ENCODE measurements at regions of chr17 and their contacts with region 1.

Region 1: DNA sequence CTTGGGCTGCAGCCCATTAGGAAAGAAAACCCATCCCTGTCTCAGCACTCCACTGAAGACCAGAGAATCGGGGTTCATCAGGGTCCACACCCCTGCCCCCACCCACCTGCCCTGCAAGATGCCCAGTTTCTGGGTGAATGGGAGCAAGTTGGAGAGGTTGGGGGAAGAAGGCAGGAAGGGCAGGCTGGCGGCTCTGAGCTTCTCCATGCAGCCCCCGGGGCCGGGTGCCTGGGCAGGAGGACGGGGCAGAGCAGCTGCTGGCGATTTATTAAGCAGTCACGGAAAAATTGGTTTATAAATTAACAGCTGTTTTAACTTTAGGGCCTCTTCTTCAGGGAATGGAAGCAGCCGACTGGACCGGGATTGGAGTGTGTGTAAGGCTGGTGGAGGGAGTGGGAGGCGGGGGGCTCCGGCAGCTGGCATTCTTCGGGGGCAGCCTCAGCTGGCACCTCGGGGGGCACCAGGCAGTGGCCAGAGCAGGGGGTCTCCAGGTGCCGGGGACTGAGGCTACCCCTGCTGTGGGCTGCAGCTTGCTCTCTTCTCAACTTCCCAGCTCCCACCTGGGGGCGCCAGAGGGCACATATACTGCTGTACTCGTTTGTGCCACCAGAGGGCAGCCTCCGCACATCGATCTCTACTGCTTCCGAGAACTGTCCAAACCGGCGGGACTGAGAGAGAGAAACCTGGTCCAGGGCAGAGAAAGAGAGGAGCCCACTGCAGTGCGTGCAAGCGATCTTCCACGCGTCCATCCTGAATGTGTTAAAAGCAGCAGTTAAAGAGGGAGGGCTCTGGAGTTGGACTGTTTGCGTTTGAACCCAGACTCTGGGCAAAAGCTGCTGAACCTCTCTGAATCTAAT is 5.0 kb upstream of the PPP1R1B start:
- DNase-seq: peak; percentile 91
- ATAC-seq: peak; percentile 51
- H3K4me3 Mint-ChIP-seq: no peak overlapping the region
- H3K27ac Mint-ChIP-seq: no peak overlapping the region
- H3K4me1 Mint-ChIP-seq: peaks cover 31% of the 10 kb centered on the region
- H3K27me3 Mint-ChIP-seq: peaks cover 82% of the 10 kb centered on the region
- CTCF ChIP-seq: peak; percentile 100

Region 2: DNA sequence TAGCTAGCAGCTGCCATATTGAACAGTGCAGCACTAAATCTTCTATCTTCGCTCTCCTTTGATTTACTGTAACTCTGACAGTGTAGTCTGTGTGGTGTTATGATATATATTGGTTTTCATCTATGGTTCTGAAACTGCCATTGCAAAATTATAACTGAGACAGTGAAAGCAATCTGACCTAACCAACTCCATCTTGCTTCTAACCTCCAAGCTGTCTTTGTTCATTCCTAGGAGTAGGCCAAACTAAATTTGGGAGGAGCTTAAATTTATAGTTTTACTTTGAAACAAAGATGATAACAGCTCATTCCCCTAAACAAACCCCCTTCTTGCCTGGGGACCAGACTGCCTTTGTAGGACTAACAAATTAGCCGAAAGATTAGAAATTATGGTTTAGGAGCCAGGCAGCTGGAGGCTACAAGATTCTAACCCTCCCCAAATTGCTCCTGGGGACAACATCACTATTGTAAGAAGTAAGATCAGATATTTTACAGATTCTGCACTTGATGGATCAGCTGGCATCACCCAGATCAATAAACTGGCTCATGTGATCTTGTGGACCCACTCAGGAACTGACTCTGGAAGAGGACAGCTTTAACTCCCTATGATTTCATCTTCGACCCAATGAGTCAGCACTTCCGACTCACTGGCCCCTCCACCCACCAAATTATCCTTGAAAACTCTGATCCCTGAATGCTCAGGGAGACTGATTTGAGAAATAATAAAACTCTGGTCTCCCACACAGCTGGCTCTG is 607.5 kb before region 1 on chr17:
- CTCF ChIA-PET with region 1: no interaction called
- POLR2A ChIA-PET with region 1: no interaction called
- DNase-seq: no peak
- ATAC-seq: no peak
- H3K4me3 Mint-ChIP-seq: no peak overlapping the region
- H3K27ac Mint-ChIP-seq: no peak overlapping the region; the same call in 1 of the 2 replicates
- H3K4me1 Mint-ChIP-seq: peaks cover 35% of the 10 kb centered on the region
- H3K27me3 Mint-ChIP-seq: no peaks in the 10 kb centered on the region; the same call in 1 of the 2 replicates
- CTCF ChIP-seq: no peak

Region 3: DNA sequence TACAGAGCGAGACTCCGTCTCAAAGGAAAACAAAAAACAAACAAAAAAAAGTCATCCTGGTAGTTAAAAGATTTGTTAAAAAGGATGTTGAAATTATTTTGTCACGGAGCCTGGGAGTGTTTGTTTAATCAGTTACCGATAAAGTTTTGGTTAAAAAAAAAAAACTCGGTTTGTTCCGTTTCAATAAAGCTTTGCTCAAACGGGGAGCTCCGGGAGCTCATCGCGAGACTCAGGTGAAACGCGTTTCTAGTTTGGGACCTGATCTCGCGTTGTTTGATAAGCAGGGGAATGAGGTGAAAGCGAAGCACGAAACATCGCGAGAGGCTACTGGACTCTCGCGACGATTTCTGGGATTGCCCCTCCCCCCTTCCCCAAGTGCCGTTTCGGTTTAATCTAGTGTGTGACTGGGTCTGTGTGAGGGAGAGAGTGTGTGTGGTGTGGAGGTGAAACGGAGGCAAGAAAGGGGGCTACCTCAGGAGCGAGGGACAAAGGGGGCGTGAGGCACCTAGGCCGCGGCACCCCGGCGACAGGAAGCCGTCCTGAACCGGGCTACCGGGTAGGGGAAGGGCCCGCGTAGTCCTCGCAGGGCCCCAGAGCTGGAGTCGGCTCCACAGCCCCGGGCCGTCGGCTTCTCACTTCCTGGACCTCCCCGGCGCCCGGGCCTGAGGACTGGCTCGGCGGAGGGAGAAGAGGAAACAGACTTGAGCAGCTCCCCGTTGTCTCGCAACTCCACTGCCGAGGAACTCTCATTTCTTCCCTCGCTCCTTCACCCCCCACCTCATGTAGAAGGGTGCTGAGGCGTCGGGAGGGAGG is 160.4 kb before region 1 on chr17 and contains the start of gene CDK12:
- CTCF ChIA-PET with region 1: interaction called, 11 read pairs
- POLR2A ChIA-PET with region 1: no interaction called
- DNase-seq: peak; percentile 93
- ATAC-seq: peak; percentile 92
- H3K4me3 Mint-ChIP-seq: peak within 1 kb of the TSS; percentile 93
- H3K27ac Mint-ChIP-seq: peak within 1 kb of the TSS; percentile 99
- H3K4me1 Mint-ChIP-seq: peaks cover 26% of the 10 kb centered on the region
- H3K27me3 Mint-ChIP-seq: no peaks in the 10 kb centered on the region; the same call in 1 of the 2 replicates
- CTCF ChIP-seq: no peak
- total RNA-seq, gene CDK12: 58.4 to 61.6 TPM (median 59.5 TPM) in 3 replicates

Region 4: DNA sequence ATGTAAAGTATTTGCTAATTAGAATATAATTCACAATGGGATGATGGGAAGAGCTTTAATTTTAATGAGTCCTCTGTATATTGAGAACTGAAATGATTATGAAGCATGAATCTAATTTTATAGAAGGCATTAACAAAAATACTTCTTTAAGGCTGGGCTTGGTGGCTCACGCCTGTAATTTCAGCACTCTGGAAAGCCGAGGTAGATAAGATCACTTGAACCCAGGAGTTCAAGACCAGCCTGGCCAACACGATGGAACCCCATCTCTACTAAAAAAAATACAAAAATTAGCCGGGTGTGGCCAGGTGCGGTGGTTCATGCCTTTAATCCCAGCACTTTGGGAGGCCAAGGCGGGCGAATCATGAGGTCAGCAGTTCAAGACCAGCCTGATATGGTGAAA is 148.4 kb before region 1 on chr17:
- CTCF ChIA-PET with region 1: no interaction called
- POLR2A ChIA-PET with region 1: no interaction called
- DNase-seq: peak; percentile 1
- ATAC-seq: no peak
- H3K4me3 Mint-ChIP-seq: no peak overlapping the region
- H3K27ac Mint-ChIP-seq: no peak overlapping the region
- H3K4me1 Mint-ChIP-seq: no peaks in the 10 kb centered on the region
- H3K27me3 Mint-ChIP-seq: no peaks in the 10 kb centered on the region
- CTCF ChIP-seq: no peak

Region 5: GRCh38 chr17:39508987-39509386 is 112.8 kb before region 1 on chr17:
- CTCF ChIA-PET with region 1: no interaction called
- POLR2A ChIA-PET with region 1: no interaction called
- DNase-seq: no peak
- ATAC-seq: no peak
- H3K4me3 Mint-ChIP-seq: no peak overlapping the region
- H3K27ac Mint-ChIP-seq: no peak overlapping the region
- H3K4me1 Mint-ChIP-seq: no peaks in the 10 kb centered on the region
- H3K27me3 Mint-ChIP-seq: no peaks in the 10 kb centered on the region
- CTCF ChIP-seq: no peak

Region 6: DNA sequence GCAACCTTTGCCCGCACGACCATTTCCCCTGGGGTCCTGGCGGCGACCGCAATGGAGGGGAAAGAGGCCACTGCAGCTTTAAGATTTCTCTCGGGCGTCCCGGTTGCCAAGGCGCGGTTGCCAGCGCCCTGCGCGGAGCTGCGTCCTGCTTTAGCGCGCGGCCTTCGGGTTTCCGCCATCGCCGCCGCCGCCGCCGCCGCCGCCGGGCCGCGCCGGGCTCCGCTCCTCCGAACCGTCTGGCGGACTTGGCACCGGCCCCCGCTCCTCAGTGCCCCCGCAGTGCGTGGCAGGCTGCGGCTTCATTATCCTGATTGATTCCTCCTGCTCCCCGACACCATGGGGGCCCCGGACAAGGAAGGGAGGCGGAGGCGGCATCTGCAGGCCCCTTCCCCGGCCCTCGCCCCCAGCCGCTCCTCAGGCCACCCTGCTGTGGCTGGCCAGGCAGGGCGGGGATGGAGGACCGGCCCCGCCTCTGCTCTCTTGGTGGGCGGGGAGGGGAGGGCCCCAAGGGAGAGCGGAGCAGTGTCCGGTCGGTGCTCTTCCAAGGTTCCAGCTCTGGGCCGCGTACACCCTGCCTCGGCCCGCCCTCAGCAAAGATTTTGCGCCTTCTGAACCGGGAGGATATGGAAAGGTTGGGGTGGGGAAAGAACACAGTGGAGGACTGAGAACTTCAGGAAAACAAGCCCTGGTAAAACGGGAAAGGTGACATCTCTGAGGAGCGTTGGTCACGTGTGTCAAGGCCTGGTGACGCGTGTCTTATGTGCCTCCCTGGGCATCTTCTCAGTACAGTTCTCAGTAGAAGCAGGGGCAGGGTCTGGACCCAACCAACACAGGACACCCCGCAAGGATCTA is 48.1 kb before region 1 on chr17:
- CTCF ChIA-PET with region 1: interaction called, 39 read pairs
- POLR2A ChIA-PET with region 1: no interaction called
- DNase-seq: peak; percentile 70
- ATAC-seq: peak; percentile 82
- H3K4me3 Mint-ChIP-seq: peak overlapping the region; percentile 79
- H3K27ac Mint-ChIP-seq: peak overlapping the region; percentile 73
- H3K4me1 Mint-ChIP-seq: peaks cover 12% of the 10 kb centered on the region
- H3K27me3 Mint-ChIP-seq: peaks cover 30% of the 10 kb centered on the region
- CTCF ChIP-seq: no peak

Region 7: DNA sequence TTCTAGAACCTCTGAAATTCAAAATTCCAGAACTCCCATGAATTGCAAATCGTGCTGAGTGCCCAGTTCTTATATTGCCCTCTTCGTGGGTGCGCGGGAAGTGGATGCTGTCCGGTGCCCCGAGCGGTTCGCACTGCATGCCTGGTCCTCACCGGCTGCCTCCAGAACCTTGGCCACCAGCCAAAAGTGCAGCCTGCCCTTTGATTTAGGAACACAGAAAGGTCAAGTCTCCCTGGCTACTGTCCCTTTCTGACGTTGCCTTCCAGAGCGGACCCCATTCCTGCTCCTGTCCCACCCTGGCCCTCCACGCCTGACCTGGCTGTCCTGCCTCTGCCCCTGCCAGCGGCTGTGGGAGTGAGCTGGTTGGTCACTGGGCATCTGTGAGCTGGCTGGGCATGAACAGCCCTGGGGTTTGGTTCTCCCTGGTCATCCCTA is 23.7 kb before region 1 on chr17:
- CTCF ChIA-PET with region 1: interaction called, 98 read pairs
- POLR2A ChIA-PET with region 1: no interaction called
- DNase-seq: no peak
- ATAC-seq: no peak
- H3K4me3 Mint-ChIP-seq: peak overlapping the region; percentile 20; the same call in 1 of the 2 replicates
- H3K27ac Mint-ChIP-seq: no peak overlapping the region
- H3K4me1 Mint-ChIP-seq: peaks cover 59% of the 10 kb centered on the region
- H3K27me3 Mint-ChIP-seq: peaks cover 100% of the 10 kb centered on the region
- CTCF ChIP-seq: no peak

Region 8: GRCh38 chr17:39643271-39643670 is 21.5 kb after region 1 on chr17:
- CTCF ChIA-PET with region 1: interaction called, 851 read pairs
- POLR2A ChIA-PET with region 1: no interaction called
- DNase-seq: no peak
- ATAC-seq: no peak
- H3K4me3 Mint-ChIP-seq: no peak overlapping the region
- H3K27ac Mint-ChIP-seq: 0 out of 2 replicates have a peak overlapping the region, but pooled peaks have one; percentile 37
- H3K4me1 Mint-ChIP-seq: peaks cover 55% of the 10 kb centered on the region
- H3K27me3 Mint-ChIP-seq: no peaks in the 10 kb centered on the region
- CTCF ChIP-seq: no peak

Region 9: DNA sequence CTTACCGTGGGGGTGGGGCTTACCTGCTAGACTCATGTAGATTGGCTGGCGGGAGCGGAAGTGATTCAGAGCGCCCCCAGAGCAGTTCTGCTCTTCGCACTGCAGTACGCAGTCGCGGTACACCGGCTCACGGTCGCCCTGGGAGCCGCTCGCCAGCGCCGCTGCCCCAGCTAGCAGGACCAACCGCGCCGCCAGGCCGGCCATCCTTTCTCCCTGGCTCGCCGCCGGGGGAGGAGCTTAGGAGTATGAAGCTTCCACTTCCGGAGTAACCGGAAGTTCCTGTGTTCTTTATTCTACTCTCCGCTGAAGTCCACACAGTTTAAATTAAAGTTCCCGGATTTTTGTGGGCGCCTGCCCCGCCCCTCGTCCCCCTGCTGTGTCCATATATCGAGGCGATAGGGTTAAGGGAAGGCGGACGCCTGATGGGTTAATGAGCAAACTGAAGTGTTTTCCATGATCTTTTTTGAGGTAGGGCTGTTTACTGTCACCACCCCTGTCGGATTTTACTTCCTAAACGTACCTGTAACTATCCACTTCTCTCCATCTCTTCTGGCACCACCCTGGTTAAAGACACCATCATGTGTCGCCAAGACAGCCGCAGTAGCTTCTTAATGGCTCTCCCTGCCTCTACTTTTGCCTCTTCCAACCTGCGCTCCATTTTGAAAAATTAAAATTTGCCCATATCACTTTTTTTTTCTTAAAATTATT is 66.2 kb after region 1 on chr17 and contains the start of gene PGAP3:
- CTCF ChIA-PET with region 1: interaction called, 29 read pairs
- POLR2A ChIA-PET with region 1: no interaction called
- DNase-seq: peak; percentile 87
- ATAC-seq: peak; percentile 85
- H3K4me3 Mint-ChIP-seq: peak within 1 kb of the TSS; percentile 82
- H3K27ac Mint-ChIP-seq: peak within 1 kb of the TSS; percentile 93
- H3K4me1 Mint-ChIP-seq: peaks cover 41% of the 10 kb centered on the region
- H3K27me3 Mint-ChIP-seq: no peaks in the 10 kb centered on the region
- CTCF ChIP-seq: no peak
- total RNA-seq, gene PGAP3: 24.3 to 25.7 TPM (median 24.9 TPM) in 3 replicates

Region 10: DNA sequence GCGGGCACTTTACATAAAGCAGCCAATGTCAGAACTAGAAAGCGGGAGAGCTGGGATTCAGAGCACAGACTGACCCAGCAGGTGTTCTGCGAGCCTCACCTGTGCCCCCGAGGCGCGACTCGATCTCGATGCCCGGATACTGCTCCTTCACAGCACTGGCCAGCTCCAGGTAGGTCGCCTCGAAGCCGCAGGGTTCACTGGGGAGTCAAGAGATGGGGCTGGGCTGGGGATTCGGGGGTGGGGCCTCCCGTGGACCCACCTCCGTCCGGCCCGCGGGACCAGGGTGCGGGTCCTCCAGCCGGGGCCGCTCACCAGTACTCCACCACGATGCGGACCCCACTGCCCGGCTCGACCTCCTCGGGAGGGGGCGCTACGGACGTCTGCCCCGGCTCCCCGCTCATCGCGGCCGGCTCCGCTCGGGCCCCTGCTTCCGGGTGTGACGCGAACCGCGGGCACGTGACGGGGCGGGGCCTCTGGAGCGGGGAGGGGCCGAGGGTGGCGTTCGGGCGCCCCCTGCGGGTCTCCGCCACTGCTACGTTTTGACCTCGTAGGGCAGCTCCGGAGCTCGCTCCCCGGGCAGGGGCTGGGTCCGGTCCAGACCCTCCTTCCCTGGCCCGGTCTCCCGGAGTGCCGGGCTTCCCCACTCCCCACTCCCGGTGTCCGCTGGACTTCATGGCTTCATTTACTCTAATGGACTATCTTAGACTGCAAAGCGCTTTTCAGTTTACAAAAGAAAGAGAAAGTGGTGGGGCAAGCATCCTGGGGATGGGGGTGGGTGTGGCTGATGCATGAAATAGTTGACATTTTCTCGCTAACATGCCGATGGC is 108.6 kb after region 1 on chr17 and contains the start of gene MIEN1:
- CTCF ChIA-PET with region 1: interaction called, 33 read pairs
- POLR2A ChIA-PET with region 1: no interaction called
- DNase-seq: peak; percentile 97
- ATAC-seq: peak; percentile 85
- H3K4me3 Mint-ChIP-seq: peak within 1 kb of the TSS; percentile 89
- H3K27ac Mint-ChIP-seq: peak within 1 kb of the TSS; percentile 91
- H3K4me1 Mint-ChIP-seq: peaks cover 14% of the 10 kb centered on the region
- H3K27me3 Mint-ChIP-seq: no peaks in the 10 kb centered on the region
- CTCF ChIP-seq: peak; percentile 81
- total RNA-seq, gene MIEN1: 40.6 to 46.7 TPM (median 46.5 TPM) in 3 replicates

Measured in WTC11 (cell line).